PC-9 (cell line): ENCODE measurements at regions of chr5 and their contacts with region 1.

Region 1: DNA sequence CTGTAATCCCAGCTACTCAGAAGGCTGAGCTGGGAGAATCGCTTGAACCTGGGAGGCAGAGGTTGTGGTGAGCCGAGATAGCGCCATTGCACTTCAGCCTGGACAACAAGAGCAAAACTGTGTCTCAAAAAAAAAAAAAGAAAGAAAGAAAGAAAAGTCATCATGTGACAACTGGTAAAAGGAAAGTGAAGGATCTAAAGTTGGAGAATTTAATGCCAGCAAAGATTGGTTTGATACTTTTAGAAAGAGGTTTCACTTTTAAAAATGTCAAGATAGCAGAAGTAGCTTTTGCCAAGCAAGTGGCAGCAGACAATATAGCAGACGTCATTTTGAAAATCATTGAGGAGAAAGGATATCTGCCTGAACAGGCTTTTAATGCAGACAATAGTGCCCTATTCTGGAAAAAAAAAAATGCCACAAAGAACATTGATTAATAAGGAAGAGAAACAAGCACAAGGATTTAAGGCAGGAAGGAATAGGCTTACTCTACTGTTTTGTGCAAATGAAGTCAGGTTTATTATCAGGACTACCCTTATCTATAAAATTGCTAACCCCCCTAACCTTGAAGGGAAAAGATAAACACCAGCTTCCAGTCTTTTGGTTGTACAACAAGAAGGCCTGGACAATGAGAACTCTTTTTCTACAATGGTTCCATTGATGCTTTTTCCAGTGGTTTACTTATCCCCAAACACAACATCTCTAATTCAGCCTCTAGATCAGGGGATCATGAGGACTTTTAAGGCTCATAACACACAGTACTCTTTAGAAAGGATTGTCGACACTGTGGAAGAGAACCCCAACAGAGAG is 12.0 kb downstream of the PKD2L2 start:
- DNase-seq: no peak
- H3K4me3 ChIP-seq: no peak overlapping the region
- H3K27ac ChIP-seq: no peak overlapping the region
- H3K4me1 ChIP-seq: no peaks in the 10 kb centered on the region
- H3K27me3 ChIP-seq: no peaks in the 10 kb centered on the region
- CTCF ChIP-seq: no peak

Region 2: GRCh38 chr5:137833463-137833862 is 67.8 kb before region 1 on chr5:
- CTCF ChIA-PET with region 1: no interaction called
- POLR2A ChIA-PET with region 1: interaction called, 10 read pairs
- intact Hi-C with region 1: no loop called
- DNase-seq: peak; percentile 59 to 97
- H3K4me3 ChIP-seq: no peak overlapping the region
- H3K27ac ChIP-seq: peak overlapping the region; percentile 67
- H3K4me1 ChIP-seq: peaks cover 32% of the 10 kb centered on the region
- H3K27me3 ChIP-seq: no peaks in the 10 kb centered on the region
- CTCF ChIP-seq: no peak

Region 3: DNA sequence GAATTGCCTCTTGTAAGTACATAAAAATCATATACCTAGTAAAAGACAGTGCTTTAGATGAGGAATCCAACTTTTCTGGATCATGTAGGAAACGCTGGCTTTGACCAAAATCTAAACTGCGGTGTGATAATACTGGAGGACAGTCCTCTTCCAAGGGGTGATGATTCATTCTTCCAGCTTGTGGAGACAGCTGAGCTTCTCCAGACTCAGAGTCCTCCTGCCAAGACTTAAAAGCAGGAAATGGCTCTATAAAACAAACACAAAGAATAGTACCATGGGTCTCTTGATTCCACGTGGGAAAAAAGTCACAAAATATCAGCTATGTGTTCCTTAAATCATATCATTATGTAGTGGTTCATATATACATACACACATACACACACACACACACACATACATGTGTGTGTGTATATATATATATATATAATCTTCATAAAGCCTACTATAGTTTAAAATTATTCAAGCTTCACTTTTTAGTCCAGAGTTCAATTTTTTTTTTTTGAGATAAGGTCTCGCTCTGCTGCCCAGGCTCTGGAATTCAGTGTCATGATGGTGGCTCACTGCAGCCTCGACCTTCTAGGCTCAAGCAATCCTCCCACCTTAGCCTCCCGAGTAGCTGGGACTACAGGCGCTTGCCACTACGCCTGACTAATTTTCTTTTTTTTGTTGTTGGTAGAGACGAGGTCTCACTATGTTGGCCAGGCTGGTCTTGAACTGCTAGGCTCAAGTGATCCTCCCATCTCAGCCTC is 53.1 kb after region 1 on chr5:
- CTCF ChIA-PET with region 1: interaction called, 17 read pairs
- POLR2A ChIA-PET with region 1: no interaction called
- intact Hi-C with region 1: no loop called
- DNase-seq: no peak
- H3K4me3 ChIP-seq: no peak overlapping the region
- H3K27ac ChIP-seq: no peak overlapping the region
- H3K4me1 ChIP-seq: no peaks in the 10 kb centered on the region
- H3K27me3 ChIP-seq: no peaks in the 10 kb centered on the region
- CTCF ChIP-seq: no peak

Region 4: GRCh38 chr5:138011991-138012390 is 110.8 kb after region 1 on chr5:
- CTCF ChIA-PET with region 1: no interaction called
- POLR2A ChIA-PET with region 1: interaction called, 11 read pairs
- intact Hi-C with region 1: no loop called
- DNase-seq: peak in 1 of 2 experiments; percentile 66
- H3K4me3 ChIP-seq: no peak overlapping the region
- H3K27ac ChIP-seq: no peak overlapping the region
- H3K4me1 ChIP-seq: peaks cover 10% of the 10 kb centered on the region; the same call in 1 of the 2 replicates
- H3K27me3 ChIP-seq: no peaks in the 10 kb centered on the region
- CTCF ChIP-seq: no peak